GM10248 (cell line): ENCODE measurements at regions of chr1 and their contacts with region 1.

Region 1: DNA sequence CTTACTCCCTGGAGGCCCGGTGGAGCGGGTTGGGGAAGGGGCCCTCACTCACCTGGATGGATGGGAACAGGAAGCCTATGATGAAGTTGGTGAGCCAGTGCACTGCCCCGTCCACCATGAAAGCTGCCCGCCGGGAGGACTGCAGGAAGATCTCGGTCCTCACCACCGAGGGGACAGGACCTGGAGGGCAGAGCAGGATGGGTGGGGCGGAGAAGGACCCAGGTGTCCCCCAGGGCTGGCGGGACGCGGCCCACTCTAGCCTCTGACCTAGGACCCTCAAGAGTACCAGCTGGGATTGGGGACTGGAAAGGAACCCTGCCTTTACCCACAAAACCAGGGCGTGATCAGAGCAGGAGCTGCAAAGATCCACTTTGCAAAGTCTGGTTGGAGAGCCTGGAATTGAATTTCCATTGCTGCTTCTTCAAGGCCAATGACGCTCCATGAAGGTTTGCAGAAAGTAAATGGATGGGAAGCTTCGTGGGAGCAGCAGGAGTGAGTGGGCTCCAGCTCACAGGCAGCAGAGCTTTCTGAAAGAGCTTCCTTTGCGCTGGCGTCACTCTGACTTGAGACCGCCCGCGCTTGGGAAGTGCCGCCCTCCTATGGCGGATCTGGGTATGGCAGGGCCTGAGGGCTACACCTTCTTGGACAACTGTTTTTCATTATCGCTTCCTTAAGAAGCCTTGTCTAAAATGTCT is 21.4 kb downstream of the SLC2A7 start:
- DNase-seq: peak; percentile 91
- CTCF ChIP-seq: peak; percentile 93

Region 2: DNA sequence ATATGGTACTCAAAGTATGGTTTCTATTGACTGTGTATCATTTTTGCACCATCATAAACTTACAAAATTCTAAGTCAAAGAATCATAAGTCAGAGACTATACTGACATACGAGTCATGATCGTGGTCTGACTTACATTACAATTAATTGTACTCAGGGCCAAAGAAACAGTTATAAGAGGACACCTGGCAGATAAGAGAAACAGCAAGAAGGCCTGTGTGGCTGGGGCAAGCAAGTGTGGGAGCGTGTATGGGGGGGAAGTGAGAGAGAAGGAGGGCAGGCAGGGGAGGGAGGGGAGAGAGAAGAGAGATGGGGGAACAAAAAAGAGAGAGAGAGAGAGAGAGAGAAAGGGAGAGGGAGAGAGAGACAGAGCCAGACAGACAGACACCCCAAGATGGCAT is 258.3 kb before region 1 on chr1:
- CTCF ChIA-PET with region 1: no interaction called
- POLR2A ChIA-PET with region 1: no interaction called
- DNase-seq: no peak
- CTCF ChIP-seq: no peak

Region 3: GRCh38 chr1:8925406-8925805 is 79.4 kb before region 1 on chr1:
- CTCF ChIA-PET with region 1: interaction called, 85 read pairs
- POLR2A ChIA-PET with region 1: no interaction called
- DNase-seq: no peak
- CTCF ChIP-seq: no peak

Region 4: DNA sequence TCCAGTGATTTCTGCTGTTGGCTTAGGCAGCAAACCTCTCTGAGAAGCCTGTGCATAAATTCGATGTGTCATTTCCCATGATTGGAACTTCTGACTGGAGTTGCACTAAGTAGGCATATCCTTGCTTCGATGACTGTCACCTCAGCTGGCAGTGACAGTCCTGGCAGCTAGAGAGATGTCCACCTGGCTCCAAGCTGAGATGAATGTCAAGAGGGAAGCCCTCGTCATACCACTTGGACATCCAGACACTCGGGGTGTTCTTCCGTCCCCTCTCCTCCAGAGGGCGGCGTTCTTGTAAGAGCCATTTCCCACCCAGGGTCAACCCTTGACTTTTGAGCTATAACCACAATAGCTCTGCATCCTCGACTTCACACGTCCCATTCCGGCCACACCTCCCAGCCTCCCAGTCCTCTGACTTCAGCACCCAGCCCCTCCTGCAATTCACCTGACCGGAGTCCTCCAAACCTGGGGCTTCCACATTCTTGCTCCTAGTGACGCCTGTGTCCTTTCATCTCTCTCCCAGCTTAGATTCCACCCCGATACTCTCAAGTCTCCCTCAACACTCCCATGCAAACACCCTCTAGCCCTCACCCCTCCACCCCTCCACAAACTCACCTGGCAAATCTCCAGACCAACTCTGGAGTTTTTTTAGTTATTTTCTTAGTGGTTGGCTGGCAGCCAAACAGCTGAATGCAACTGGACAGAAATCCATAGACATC is 41.9 kb before region 1 on chr1:
- CTCF ChIA-PET with region 1: interaction called, 35 read pairs
- POLR2A ChIA-PET with region 1: no interaction called
- DNase-seq: peak; percentile 78
- CTCF ChIP-seq: peak; percentile 45

Region 5: GRCh38 chr1:8992936-8993687 is 11.7 kb before region 1 on chr1:
- CTCF ChIA-PET with region 1: interaction called, 30 read pairs
- POLR2A ChIA-PET with region 1: no interaction called
- DNase-seq: no peak
- CTCF ChIP-seq: no peak

Region 6: GRCh38 chr1:9025449-9025848 is 20.6 kb after region 1 on chr1:
- CTCF ChIA-PET with region 1: interaction called, 11 read pairs
- POLR2A ChIA-PET with region 1: no interaction called
- DNase-seq: no peak
- CTCF ChIP-seq: no peak

Region 7: GRCh38 chr1:9101510-9102146 is 96.8 kb after region 1 on chr1:
- CTCF ChIA-PET with region 1: interaction called, 68 read pairs
- POLR2A ChIA-PET with region 1: no interaction called
- DNase-seq: peak; percentile 82
- CTCF ChIP-seq: peak; percentile 79